ENCODE measurements at regions of chr10 and their contacts with region 1.

Region 1: DNA sequence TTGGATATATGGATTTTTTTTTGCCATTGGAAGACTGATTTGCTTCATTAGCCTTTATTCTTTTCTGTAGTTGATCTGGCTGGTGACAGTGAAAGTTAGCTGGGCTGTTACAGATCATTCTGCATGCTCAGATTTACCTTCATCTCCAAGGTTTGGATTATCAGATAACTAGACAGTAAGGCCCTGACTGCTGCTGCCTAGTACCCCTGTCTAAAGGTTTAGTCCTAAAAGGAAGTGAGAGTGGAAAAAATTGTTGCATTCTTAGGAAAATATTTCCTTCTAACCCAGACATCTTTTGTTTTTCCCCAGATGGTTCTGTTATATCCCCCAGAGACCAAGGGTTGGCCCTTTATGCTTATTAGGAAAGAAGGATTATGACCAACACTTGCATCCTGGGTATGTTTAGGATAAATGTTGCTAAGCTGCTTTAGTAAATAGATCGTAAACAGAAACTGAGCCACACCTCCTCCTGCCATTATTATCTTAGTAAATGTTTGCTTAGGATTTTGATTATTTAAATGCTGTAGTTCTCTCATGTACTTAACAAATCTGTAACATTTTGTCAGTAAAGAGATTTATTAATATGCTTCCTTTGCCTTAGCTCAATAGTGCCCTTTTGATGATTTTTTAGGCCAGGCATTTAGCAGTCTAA is 44.4 kb downstream of the MCU start:
- DNase-seq: no peak
- H3K4me3 ChIP-seq: no peak overlapping the region
- H3K27ac ChIP-seq: peak overlapping the region; percentile 59 to 67
- H3K4me1 ChIP-seq: peaks cover 14 to 25% of the 10 kb centered on the region in 2 donors
- H3K27me3 ChIP-seq: no peaks in the 10 kb centered on the region
- CTCF ChIP-seq: no peak

Region 2: DNA sequence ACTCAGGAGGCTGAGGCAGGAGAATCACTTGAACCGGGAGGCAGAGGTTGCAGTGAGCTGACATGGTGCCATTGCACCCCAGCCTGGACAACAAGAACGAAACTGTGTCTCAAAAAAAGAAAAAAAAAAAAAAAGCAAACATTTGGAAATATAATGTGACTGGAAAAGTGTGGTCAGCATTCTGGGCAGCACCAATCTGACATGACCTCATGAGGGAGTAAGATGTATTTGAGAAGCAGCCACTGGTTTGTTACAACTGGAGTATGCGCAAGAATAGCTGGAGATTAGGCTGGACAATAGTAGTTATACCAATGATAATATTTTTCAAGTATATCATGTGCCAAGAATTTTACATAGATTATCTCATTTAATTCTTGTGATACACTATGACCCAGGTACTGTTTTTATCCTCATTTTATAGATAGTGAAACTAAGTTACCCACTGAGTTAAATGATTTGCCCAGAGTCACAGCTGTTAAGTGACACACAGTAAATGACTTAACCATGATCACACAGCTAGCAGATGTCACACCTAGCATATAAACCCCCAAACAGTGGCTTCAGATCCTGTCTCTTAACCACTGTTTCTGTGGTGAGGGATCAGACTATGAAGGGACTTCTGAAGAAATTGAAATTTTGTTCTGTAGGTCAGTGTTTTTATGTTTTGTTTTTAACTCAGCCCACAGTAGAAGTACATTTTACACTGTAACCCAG is 33.3 kb before region 1 on chr10:
- intact Hi-C with region 1: loop called (anchors 5 kb)
- DNase-seq: peak in 1 of 2 donors; percentile 74
- H3K4me3 ChIP-seq: peak overlapping the region in 1 of 2 donors; percentile 8
- H3K27ac ChIP-seq: peak overlapping the region; percentile 66
- H3K4me1 ChIP-seq: peaks cover 0 to 10% of the 10 kb centered on the region in 2 donors
- H3K27me3 ChIP-seq: no peaks in the 10 kb centered on the region
- CTCF ChIP-seq: peak in 2 of 3 experiments; percentile 11 to 36

Region 3: DNA sequence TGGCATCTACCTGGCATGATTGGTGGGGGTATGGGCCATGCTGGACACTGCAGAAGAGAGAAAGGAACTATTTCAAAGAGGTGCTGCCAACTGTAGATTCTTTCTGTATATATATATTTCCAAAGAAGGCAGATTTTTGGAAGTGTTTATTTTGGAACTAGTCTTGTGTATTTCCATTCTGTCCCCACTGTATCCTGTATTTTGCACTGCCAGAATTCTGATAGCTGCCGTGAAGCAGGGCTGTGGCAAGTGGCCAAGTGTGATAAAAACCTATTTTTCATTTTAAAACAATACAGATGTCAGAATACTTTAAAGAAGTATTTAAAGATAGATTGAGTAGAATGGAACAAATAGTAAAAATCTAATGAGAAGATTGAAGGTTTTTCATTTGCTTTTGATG is 27.3 kb before region 1 on chr10:
- intact Hi-C with region 1: loop called (anchors 2 kb)
- DNase-seq: no peak
- H3K4me3 ChIP-seq: peak overlapping the region in 1 of 2 donors; percentile 41
- H3K27ac ChIP-seq: peak overlapping the region; percentile 74 to 86
- H3K4me1 ChIP-seq: peaks cover 6 to 40% of the 10 kb centered on the region in 2 donors
- H3K27me3 ChIP-seq: no peaks in the 10 kb centered on the region
- CTCF ChIP-seq: no peak

Region 4: DNA sequence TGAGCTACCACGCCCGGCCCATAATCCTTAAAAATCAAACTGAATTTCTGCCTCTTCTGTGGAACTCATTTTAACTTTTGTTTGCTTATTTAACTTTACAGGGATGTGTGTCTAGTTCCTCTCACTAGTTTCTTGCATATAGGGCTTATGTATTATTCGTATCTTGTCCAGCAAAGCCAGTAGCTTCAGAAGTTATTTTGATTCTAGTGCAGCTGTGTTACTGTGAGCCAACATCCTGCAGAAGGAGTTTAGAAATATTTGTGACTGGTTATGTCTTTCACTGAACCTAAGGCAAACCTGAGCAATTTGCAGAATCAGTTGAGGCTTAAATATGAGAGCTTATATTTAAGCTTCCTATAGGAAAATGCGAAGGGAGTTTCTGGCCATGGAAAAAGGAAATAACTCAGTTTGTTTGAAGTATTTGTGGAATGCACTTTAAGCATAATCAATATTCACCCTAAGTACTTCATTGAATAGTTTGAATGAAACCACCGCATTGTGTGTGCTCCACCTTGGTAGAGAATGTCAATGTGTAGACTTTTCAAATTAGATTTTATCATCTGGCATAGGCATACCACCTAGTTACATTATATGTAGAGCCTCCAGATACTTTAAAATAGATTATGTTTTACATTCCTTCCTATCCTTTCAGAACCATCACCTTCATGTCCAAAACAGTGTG is 46.5 kb after region 1 on chr10:
- intact Hi-C with region 1: no loop called
- DNase-seq: no peak
- H3K4me3 ChIP-seq: no peak overlapping the region
- H3K27ac ChIP-seq: no peak overlapping the region
- H3K4me1 ChIP-seq: peaks cover 6 to 20% of the 10 kb centered on the region in 2 donors
- H3K27me3 ChIP-seq: no peaks in the 10 kb centered on the region
- CTCF ChIP-seq: no peak

Measured in ascending aorta (tissue), 2 donors.